Heart left ventricle (tissue), 16 donors: ENCODE measurements at regions of chr11 and their contacts with region 1.

Region 1: DNA sequence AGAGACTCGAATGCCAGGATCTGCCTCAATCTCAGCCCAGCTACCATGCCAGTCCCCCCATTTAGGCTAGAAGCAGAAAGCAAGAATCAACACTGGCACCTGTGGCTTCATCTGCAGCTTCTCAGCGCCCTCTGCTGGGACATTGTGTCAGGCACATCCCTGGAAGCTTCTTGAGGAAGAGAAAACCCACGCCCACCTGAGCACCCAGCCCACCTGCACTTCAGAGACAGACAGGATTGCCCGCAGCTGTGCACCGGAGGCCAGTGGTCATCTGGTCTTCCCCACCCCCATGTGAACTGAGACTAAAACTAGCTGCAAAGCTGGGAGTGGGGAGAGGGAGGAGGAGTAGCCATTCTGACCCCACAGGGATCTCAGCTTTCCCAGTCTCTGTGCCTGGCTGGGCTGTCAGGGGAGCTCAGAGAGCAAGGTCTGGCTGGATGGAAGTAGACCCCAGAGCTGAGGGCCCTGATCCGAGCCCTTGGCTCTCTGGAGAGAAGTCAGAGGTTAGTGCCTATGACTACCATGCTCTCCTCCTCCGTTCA is 66.8 kb downstream of the FEZ1 start:
- DNase-seq: peak; percentile 40 to 76 (median 58)
- ATAC-seq: no peak
- H3K4me3 ChIP-seq: no peak overlapping the region
- H3K27ac ChIP-seq: peak overlapping the region in 1 of 12 donors; percentile 42
- H3K4me1 ChIP-seq: peaks cover 0 to 39% (median 17%) of the 10 kb centered on the region in 12 donors
- H3K27me3 ChIP-seq: no peaks in the 10 kb centered on the region
- CTCF ChIP-seq: peak; percentile 40 to 70 (median 60)
- POLR2A ChIP-seq: no peak

Region 2: DNA sequence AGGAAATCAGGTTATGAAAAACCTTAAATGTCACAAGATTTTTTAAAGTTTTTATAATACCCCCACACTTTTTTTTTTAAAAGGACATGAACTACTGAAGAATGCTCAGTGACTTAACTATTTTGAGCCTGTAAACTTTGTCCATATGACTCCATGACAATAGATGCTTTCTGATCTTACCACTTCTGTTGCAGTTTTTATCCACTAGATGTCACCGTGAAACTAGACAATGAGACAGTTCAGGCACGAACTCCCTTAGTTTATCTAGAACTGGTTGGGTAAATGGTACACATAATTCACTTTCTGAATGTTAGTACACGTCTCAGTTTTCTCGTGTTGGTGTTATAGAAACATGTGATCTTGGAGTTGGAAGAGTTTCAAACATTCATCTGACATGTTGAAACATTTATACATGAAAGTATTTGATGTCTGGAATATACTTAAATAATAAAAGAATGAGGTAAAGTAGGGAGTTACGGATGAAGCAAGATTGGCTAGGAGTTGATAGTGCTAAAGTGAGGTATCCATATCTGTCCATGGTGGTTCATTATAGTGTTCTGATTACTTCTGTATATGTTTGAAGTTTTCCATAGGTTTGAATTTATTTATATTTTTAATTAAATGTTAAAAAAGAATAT is 467.1 kb before region 1 on chr11:
- intact Hi-C with region 1: loop called in 4 of 10 experiments (anchors 2 to 10 kb)
- DNase-seq: no peak
- ATAC-seq: peak in 3 of 4 donors; percentile 81 to 85 (median 83)
- H3K4me3 ChIP-seq: no peak overlapping the region
- H3K27ac ChIP-seq: no peak overlapping the region
- H3K4me1 ChIP-seq: peaks cover 0 to 3% (median 0%) of the 10 kb centered on the region in 12 donors
- H3K27me3 ChIP-seq: no peaks in the 10 kb centered on the region
- CTCF ChIP-seq: peak; percentile 55 to 78 (median 70)
- POLR2A ChIP-seq: no peak

Region 3: GRCh38 chr11:125376117-125376516 is 53.1 kb before region 1 on chr11:
- intact Hi-C with region 1: loop called in 1 of 10 experiments (anchors 2 kb)
- DNase-seq: peak; percentile 77 to 92 (median 80)
- ATAC-seq: peak; percentile 94 to 96 (median 94)
- H3K4me3 ChIP-seq: no peak overlapping the region
- H3K27ac ChIP-seq: peak overlapping the region in 11 of 12 donors; percentile 3 to 81 (median 58)
- H3K4me1 ChIP-seq: peaks cover 0 to 46% (median 25%) of the 10 kb centered on the region in 12 donors
- H3K27me3 ChIP-seq: no peaks in the 10 kb centered on the region
- CTCF ChIP-seq: peak in 2 of 12 donors; percentile 5 to 14
- POLR2A ChIP-seq: peak in 1 of 2 donors; percentile 50

Region 4: GRCh38 chr11:125410091-125410490 is 19.1 kb before region 1 on chr11:
- intact Hi-C with region 1: loop called in 1 of 10 experiments (anchors 1 kb)
- DNase-seq: no peak
- ATAC-seq: no peak
- H3K4me3 ChIP-seq: no peak overlapping the region
- H3K27ac ChIP-seq: no peak overlapping the region
- H3K4me1 ChIP-seq: peaks cover 0 to 13% (median 7%) of the 10 kb centered on the region in 12 donors
- H3K27me3 ChIP-seq: no peaks in the 10 kb centered on the region
- CTCF ChIP-seq: no peak
- POLR2A ChIP-seq: no peak

Region 5: GRCh38 chr11:125489166-125489565 is 59.9 kb after region 1 on chr11:
- intact Hi-C with region 1: no loop called
- DNase-seq: no peak
- ATAC-seq: no peak
- H3K4me3 ChIP-seq: no peak overlapping the region
- H3K27ac ChIP-seq: no peak overlapping the region
- H3K4me1 ChIP-seq: peaks cover 0 to 7% (median 0%) of the 10 kb centered on the region in 12 donors
- H3K27me3 ChIP-seq: peaks cover 0 to 19% (median 0%) of the 10 kb centered on the region in 9 donors
- CTCF ChIP-seq: no peak
- POLR2A ChIP-seq: no peak

Region 6: GRCh38 chr11:125887373-125888324 is 458.4 kb after region 1 on chr11 and contains the start of gene HYLS1:
- intact Hi-C with region 1: loop called in 1 of 10 experiments (anchors 10 kb)
- DNase-seq: peak; percentile 93 to 98 (median 95)
- ATAC-seq: peak; percentile 98 to 100 (median 99)
- H3K4me3 ChIP-seq: peak within 1 kb of the TSS; percentile 56 to 95 (median 79)
- H3K27ac ChIP-seq: peak within 1 kb of the TSS; percentile 80 to 98 (median 94)
- H3K4me1 ChIP-seq: peaks cover 0 to 27% (median 5%) of the 10 kb centered on the region in 12 donors
- H3K27me3 ChIP-seq: no peaks in the 10 kb centered on the region
- CTCF ChIP-seq: peak in 9 of 12 donors; percentile 15 to 63 (median 34)
- POLR2A ChIP-seq: peak in 1 of 2 donors; percentile 78
- total RNA-seq, gene HYLS1: 3.4 to 6.9 (median 4.5) TPM